HCT116 (cell line): ENCODE measurements at regions of chr2 and their contacts with region 1.

Region 1: DNA sequence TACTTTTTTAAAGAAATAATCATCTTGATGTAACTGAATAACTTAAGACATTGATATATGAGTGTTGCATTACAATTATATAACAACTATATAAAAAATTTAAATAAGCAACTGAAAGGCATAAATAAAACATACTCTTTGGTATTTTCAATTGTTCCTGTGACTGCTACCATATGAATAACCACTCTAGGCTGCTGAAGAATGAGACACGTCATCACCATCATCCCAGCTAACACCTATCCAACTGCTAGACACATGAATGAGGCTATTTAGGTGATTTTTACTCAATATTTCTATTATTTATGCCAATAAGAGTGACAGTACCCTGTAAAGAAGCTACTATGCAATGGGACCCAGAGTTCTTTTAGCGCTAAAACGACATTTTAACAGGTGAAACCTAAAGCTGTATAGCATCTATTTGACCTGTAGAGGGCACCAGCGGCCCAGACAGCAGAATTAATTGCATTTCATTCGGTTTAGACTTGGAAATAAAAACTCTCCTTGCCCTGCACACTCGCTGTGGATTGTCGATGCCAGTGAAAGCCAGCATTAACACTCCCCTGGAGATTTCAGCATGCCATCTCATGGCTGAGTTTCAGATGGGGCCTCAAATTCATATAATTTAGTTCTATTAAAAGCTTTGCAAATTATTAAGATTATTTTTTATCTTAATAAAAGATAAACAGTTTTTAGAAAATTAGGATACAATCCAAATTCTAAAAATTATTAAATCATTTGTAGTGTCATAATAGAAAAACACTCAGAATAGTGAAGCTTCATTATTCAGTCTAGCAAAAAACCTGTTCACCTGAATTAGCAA is 89.4 kb upstream of the MAP2 start:
- DNase-seq: peak; percentile 60
- ATAC-seq: peak; percentile 96
- H3K4me3 ChIP-seq: peak overlapping the region in 1 of 2 experiments; percentile 27; a peak in 2 of 4 replicates
- H3K27ac ChIP-seq: no peak overlapping the region
- H3K4me1 ChIP-seq: peaks cover 0 to 4% of the 10 kb centered on the region in 2 experiments; a peak in 2 of 4 replicates
- H3K27me3 ChIP-seq: no peaks in the 10 kb centered on the region
- CTCF ChIP-seq: peak; percentile 77 to 97 (median 90)
- POLR2A ChIP-seq: no peak
- RAD21 ChIP-seq: peak; percentile 98

Region 2: DNA sequence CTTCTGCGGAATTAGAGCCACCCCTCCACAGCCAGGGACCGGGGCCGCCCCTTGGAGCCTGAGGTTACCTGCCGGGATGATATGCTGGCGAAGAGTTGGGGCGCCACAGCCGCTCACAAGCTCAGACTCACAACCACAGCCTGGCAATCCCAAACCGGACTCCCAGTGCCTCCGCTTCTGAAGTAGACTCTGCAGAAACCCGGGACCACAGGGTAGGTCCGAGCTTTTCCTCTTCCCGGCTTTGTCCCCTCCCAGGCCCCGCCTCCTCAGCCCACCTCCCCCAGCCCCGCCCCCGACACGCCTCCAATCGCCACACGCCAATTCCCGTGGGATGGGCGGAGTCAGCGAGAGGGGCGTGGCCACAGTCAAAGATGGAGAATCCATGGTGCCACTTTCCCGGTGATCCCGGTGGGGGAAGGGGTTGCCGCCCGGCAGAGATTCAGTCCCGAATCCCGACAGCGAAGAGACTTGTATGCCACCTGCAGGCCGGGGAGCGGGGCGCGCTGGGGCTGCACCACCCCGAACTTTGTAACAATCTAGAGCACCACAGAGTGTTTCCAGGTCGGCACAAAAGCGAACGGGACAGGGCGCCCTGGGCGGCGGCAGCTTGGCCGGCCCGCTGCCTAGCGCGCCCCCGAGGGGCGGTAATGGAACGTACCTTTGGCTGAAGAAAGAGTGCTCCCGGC is 1079.4 kb before region 1 on chr2 and contains the start of gene IDH1:
- CTCF ChIA-PET with region 1: no interaction called
- POLR2A ChIA-PET with region 1: no interaction called
- RAD21 ChIA-PET with region 1: no interaction called
- intact Hi-C with region 1: loop called (anchors 5 kb)
- DNase-seq: peak; percentile 87
- ATAC-seq: peak; percentile 79
- H3K4me3 ChIP-seq: peak within 1 kb of the TSS; percentile 79 to 80
- H3K27ac ChIP-seq: peak within 1 kb of the TSS; percentile 73
- H3K4me1 ChIP-seq: peaks cover 10 to 20% of the 10 kb centered on the region in 2 experiments; a peak in 3 of 4 replicates
- H3K27me3 ChIP-seq: no peaks in the 10 kb centered on the region
- CTCF ChIP-seq: peak; percentile 60 to 64 (median 62); a peak in 5 of 6 replicates
- POLR2A ChIP-seq: no peak
- RAD21 ChIP-seq: peak; percentile 61
- total RNA-seq, gene IDH1: 91.2 TPM

Region 3: GRCh38 chr2:208466151-208466919 is 868.1 kb before region 1 on chr2:
- CTCF ChIA-PET with region 1: interaction called, 12 read pairs
- POLR2A ChIA-PET with region 1: no interaction called
- RAD21 ChIA-PET with region 1: no interaction called
- intact Hi-C with region 1: no loop called
- DNase-seq: peak; percentile 44
- ATAC-seq: peak; percentile 90
- H3K4me3 ChIP-seq: no peak overlapping the region
- H3K27ac ChIP-seq: no peak overlapping the region
- H3K4me1 ChIP-seq: no peaks in the 10 kb centered on the region
- H3K27me3 ChIP-seq: no peaks in the 10 kb centered on the region
- CTCF ChIP-seq: peak; percentile 58 to 79 (median 74)
- POLR2A ChIP-seq: no peak
- RAD21 ChIP-seq: peak; percentile 83

Region 4: GRCh38 chr2:209208211-209208610 is 126.2 kb before region 1 on chr2:
- CTCF ChIA-PET with region 1: interaction called, 3 read pairs
- POLR2A ChIA-PET with region 1: no interaction called
- RAD21 ChIA-PET with region 1: no interaction called
- intact Hi-C with region 1: loop called (anchors 5 kb)
- DNase-seq: peak; percentile 41
- ATAC-seq: peak; percentile 77
- H3K4me3 ChIP-seq: 0 out of 4 replicates have a peak overlapping the region, but pooled peaks of 1 of the 2 experiments have one; percentile 18
- H3K27ac ChIP-seq: no peak overlapping the region
- H3K4me1 ChIP-seq: no peaks in the 10 kb centered on the region
- H3K27me3 ChIP-seq: no peaks in the 10 kb centered on the region
- CTCF ChIP-seq: peak; percentile 64 to 86 (median 69)
- POLR2A ChIP-seq: no peak
- RAD21 ChIP-seq: peak; percentile 85

Region 5: DNA sequence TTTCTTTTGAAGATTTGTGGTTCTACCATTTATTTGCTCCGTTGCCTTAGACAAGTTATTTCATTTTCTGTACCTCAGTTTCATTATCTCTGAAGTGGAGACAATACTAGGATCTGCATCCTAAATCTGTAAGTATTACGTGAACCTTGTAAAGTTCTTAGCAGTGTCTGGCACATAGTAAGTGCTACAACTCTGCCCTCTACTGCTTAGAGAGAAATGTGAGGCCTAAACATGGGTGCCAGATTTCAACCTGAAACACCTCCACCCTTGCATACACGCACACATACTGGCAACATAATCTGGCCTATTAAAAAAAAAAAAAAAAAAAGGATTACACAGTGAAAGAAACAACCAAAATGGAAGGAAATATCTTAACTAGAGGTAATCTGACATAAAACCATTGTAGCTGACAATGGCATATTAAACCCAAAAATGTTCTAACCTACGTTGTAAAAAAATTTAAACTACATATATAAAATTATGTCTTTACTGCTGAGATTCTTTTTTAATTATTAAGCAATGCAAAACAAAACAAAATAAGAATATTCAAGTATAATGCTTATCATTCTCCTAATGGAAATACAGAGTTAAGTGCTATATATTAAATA is 222.1 kb after region 1 on chr2:
- CTCF ChIA-PET with region 1: interaction called, 10 read pairs
- POLR2A ChIA-PET with region 1: no interaction called
- RAD21 ChIA-PET with region 1: no interaction called
- intact Hi-C with region 1: loop called (anchors 2 kb)
- DNase-seq: peak; percentile 27
- ATAC-seq: peak; percentile 92
- H3K4me3 ChIP-seq: no peak overlapping the region
- H3K27ac ChIP-seq: no peak overlapping the region
- H3K4me1 ChIP-seq: no peaks in the 10 kb centered on the region
- H3K27me3 ChIP-seq: no peaks in the 10 kb centered on the region
- CTCF ChIP-seq: peak; percentile 48 to 76 (median 58)
- POLR2A ChIP-seq: no peak
- RAD21 ChIP-seq: peak; percentile 85

Region 6: GRCh38 chr2:209960676-209961630 is 626.5 kb after region 1 on chr2:
- CTCF ChIA-PET with region 1: interaction called, 18 read pairs
- POLR2A ChIA-PET with region 1: no interaction called
- RAD21 ChIA-PET with region 1: interaction called in 1 of 2 experiments, 3 read pairs
- intact Hi-C with region 1: loop called (anchors 5 kb)
- DNase-seq: peak; percentile 65
- ATAC-seq: peak; percentile 98
- H3K4me3 ChIP-seq: no peak overlapping the region
- H3K27ac ChIP-seq: no peak overlapping the region
- H3K4me1 ChIP-seq: peaks cover 0 to 5% of the 10 kb centered on the region in 2 experiments; a peak in 2 of 4 replicates
- H3K27me3 ChIP-seq: no peaks in the 10 kb centered on the region
- CTCF ChIP-seq: peak; percentile 65 to 77 (median 76)
- POLR2A ChIP-seq: no peak
- RAD21 ChIP-seq: peak; percentile 82